ENCODE measurements at regions of chr1 and their contacts with region 1.

Region 1: DNA sequence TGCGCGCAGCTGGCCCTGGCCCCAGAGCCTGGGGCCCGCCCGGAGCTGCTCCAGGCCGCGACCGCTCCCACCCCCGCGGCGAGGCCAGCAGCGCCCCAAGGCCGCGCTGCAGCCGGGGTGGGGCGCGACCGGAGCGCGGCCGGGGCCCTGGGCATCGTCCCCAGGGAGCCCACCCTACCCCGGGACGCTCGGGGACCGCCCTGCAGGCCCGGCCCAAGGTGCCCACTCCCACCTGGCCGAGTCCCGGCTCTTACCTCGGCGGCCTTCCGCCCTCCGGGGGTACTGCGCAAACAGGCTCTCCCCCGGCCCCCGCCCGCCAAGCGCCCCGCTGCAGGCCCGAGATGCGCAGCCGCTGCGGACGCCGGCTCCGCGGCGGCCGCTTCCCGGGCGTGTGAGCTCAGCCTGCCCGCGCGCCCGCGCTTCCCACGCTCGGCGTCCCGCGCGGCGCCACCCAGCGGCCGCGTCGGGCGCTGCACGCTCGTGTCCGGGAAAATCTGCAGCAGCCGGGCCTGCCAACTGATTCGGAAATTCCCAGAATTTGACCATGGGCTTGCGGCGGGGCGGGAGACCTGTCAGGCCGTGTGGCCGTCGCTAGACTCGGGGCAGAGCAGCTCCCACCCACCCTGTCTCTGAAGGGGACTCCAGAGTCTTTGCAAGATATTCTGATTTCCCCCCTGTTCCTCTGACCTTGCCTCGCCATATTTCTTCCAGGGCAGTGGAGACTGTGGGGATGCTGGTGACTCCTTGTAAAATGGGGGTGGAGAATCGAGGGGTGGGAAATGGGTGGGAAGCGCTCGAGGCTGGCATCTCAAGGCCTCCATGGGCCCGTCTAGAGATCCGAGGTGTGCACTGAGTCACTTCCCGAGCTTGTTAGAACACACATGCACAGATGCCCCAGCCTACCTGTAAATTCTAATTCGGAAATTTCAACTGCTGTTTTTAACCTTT is 41.9 kb downstream of the CD34 start:
- DNase-seq: peak; percentile 86
- ATAC-seq: peak; percentile 86 to 88
- H3K4me3 ChIP-seq: peak overlapping the region; percentile 88
- H3K27ac ChIP-seq: peak overlapping the region; percentile 95
- H3K4me1 ChIP-seq: peaks cover 84% of the 10 kb centered on the region
- H3K27me3 ChIP-seq: no peaks in the 10 kb centered on the region
- CTCF ChIP-seq: peak; percentile 75

Region 2: GRCh38 chr1:207828485-207829158 is 40.4 kb before region 1 on chr1:
- intact Hi-C with region 1: loop called (anchors 5 kb)
- DNase-seq: peak; percentile 81
- ATAC-seq: peak; percentile 57 to 60
- H3K4me3 ChIP-seq: no peak overlapping the region
- H3K27ac ChIP-seq: peak overlapping the region; percentile 99
- H3K4me1 ChIP-seq: peaks cover 94% of the 10 kb centered on the region
- H3K27me3 ChIP-seq: no peaks in the 10 kb centered on the region
- CTCF ChIP-seq: peak; percentile 93

Measured in lower lobe of right lung (tissue), 2 donors.